Activated T-helper 2 cell treated with anti-CD3 and anti-CD28 coated beads, Interferon-gamma antibody, Interleukin-2, Interleukin-4, amounts not matched to agents 10 μg/mL and 5 μg/mL and 100 μg/mL, durations not matched to agents 14 hours and 24 hours and 36 hours (primary cell): ENCODE measurements at regions of chr20 and their contacts with region 1.

Region 1: DNA sequence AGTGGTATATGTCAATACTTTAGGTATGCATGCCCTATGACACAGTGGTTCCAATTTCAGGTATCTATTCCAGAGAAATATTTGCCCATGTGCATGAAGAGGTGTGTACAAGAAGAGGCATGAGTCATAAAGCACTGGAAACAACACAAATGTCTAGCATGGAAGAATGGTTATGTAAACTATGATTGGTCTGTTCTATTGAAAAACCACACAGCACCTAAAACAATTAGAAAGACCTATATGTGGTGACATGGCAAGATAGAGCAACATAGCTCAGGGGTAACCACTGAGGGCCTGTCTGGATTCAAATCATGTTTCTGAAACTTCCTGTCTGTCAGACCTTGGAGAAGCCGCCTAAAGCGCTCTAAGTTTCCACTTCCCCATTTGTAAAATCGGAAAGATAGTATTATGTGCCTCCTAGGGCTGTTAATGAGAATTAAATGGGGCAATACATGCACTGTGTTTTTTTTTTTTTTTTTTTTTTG is 76.0 kb upstream of the SHLD1 start:
- DNase-seq: no peak
- H3K4me3 Mint-ChIP-seq: no peak overlapping the region
- H3K27ac Mint-ChIP-seq: peak overlapping the region; percentile 72
- H3K4me1 Mint-ChIP-seq: peaks cover 11% of the 10 kb centered on the region
- H3K27me3 Mint-ChIP-seq: no peaks in the 10 kb centered on the region

Region 2: GRCh38 chr20:5596401-5597193 is 77.6 kb before region 1 on chr20:
- intact Hi-C with region 1: loop called (anchors 5 kb)
- DNase-seq: no peak
- H3K4me3 Mint-ChIP-seq: no peak overlapping the region
- H3K27ac Mint-ChIP-seq: peak overlapping the region; percentile 56
- H3K4me1 Mint-ChIP-seq: peaks cover 50% of the 10 kb centered on the region
- H3K27me3 Mint-ChIP-seq: no peaks in the 10 kb centered on the region

Region 3: DNA sequence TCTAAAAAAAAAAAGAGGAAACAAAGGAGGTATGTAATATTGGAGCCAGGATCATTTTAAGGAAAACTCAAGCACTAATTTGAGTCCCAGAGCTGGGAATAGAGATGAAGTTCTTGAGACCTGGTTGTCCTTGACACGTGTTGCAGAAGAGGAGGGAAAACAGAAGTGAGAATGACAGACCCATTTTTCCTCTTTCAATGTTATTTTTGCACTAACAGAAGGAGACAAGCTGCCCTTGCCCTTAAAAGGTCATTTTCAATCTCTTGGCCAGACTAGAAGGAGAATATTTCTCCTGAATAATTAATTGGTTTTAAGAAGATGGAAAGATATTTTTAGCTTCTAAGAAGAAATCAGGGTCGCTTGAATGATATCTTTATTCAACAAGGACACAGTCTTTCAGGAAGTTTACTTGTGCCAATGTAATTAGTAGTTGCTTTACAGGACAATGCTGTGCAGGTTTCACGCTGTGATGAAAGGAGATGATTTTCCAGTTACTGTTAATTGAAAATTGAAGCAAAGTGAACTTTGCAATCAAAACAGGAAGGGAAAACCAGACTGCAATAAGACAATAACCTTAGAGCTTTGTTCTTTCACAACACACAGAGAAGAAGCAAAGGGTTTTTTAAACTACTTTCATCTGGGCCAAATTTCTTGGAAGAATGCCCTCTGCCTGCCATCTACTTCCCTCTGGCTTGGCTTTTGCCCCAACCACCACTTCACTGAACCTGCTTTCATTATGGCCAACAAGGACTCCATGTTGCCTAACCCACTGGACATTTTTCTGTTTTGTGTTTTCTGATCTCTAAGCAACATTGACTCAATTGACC is 31.9 kb before region 1 on chr20:
- intact Hi-C with region 1: loop called (anchors 1 kb)
- DNase-seq: no peak
- H3K4me3 Mint-ChIP-seq: no peak overlapping the region
- H3K27ac Mint-ChIP-seq: no peak overlapping the region
- H3K4me1 Mint-ChIP-seq: peaks cover 28% of the 10 kb centered on the region
- H3K27me3 Mint-ChIP-seq: no peaks in the 10 kb centered on the region

Region 4: DNA sequence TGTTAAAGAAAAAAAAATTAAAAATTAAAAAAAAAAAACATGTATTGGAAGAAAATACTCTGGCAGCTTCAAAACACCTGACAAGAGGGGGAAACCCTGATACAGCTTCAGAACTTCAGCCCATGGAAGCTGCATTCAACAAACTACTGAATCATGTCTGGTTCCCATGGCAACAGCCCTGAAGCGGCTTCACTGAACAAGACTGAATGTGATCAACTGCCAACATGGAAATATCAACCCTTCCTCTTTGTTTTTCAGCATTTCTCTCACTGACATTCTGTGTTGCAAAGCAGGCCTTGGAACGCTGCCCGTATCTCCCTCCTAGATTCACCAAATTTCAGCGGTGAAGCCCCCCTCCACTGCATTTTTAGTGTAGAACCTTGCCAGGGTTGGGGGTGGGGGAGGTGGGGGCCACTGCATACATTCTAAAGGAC is 15.3 kb before region 1 on chr20:
- intact Hi-C with region 1: loop called (anchors 1 kb)
- DNase-seq: peak; percentile 12
- H3K4me3 Mint-ChIP-seq: no peak overlapping the region
- H3K27ac Mint-ChIP-seq: peak overlapping the region; percentile 78
- H3K4me1 Mint-ChIP-seq: peaks cover 15% of the 10 kb centered on the region
- H3K27me3 Mint-ChIP-seq: no peaks in the 10 kb centered on the region

Region 5: GRCh38 chr20:5714261-5715041 is 40.2 kb after region 1 on chr20:
- intact Hi-C with region 1: loop called (anchors 1 kb)
- DNase-seq: peak; percentile 61
- H3K4me3 Mint-ChIP-seq: no peak overlapping the region
- H3K27ac Mint-ChIP-seq: peak overlapping the region; percentile 49
- H3K4me1 Mint-ChIP-seq: peaks cover 17% of the 10 kb centered on the region
- H3K27me3 Mint-ChIP-seq: no peaks in the 10 kb centered on the region

Region 6: DNA sequence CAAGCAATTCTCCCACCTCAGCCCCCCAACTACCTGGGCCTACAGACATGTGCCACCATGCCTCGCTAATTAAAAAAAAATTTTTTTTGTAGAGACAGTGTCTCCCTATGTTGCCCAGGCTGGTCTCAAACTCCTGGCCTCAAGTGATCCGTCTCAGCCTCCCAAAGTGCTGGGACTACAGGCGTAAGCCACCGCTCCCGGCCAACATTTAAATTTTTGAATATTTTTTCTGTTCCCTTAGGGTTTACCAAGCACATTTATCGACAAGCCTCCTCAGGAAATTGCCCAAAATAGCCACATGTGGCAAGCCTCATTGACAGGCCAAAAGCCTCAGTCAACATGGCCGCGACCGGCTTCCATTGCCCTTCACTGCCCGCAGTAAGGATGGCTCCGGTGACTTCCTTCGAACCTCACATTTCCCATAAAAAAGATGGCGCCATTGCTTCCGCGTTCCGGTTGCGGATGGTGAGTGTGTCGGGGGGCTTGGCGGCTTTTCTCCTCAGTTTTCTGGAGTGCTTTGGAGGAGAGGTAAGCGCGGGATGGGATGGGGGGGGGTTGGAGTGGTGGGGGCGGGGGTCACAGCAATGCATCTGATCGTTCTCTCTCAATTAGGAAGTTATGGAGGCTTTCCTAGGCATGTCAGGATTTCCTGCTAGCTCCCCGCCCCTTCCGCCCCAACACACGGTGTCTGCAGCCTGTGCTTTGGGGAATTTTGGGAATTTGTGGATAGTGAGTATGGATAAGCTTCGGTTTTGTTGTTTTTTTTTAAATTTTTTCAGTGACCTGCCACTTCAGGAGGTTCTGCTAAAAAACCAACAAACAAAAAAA is 75.9 kb after region 1 on chr20 and contains the start of gene SHLD1:
- intact Hi-C with region 1: loop called (anchors 2 kb)
- DNase-seq: peak; percentile 76
- H3K4me3 Mint-ChIP-seq: peak within 1 kb of the TSS; percentile 87
- H3K27ac Mint-ChIP-seq: peak within 1 kb of the TSS; percentile 92
- H3K4me1 Mint-ChIP-seq: peaks cover 9% of the 10 kb centered on the region
- H3K27me3 Mint-ChIP-seq: no peaks in the 10 kb centered on the region
- total RNA-seq, gene SHLD1: 11.0 and 11.8 TPM in 2 replicates

Region 7: DNA sequence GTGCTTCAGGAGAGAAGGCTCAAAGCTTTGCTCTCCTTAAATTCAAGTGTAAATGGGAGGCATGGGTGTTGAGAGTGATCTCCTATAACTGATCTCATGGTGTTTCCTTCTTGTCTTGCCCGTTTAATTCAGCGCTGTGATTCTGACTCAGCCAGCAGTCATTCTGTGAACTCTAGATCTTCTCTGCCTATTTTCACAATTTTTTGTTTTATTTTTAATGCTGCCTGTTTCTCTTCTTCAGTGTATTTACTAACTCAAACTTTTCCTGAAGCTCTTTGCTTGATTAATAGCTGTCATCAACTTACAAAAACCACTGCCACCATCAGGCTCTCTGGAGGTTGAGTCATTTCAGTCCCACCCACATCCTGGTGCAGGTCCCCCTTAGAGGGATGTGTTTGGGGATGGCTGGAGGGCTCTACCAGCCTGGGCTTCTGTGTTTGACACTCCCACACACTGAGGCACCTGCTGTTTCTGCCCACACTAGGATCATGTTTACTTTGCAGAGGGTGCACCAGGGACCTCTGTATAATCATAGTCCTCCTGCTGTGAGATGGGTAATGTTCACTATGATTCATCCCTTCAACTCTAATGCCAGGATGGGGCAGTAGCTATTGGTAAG is 170.0 kb after region 1 on chr20:
- intact Hi-C with region 1: loop called (anchors 5 kb)
- DNase-seq: peak; percentile 64
- H3K4me3 Mint-ChIP-seq: peak overlapping the region; percentile 61
- H3K27ac Mint-ChIP-seq: peak overlapping the region; percentile 89
- H3K4me1 Mint-ChIP-seq: peaks cover 55% of the 10 kb centered on the region
- H3K27me3 Mint-ChIP-seq: peaks cover 2% of the 10 kb centered on the region